Activated CD8-positive, alpha-beta memory T cell treated with anti-CD3 and anti-CD28 coated beads, Interleukin-2, amount 10 ng/mL, durations not matched to agents 7 days and 5 days (primary cell): ENCODE measurements at regions of chr9 and their contacts with region 1.

Region 1: DNA sequence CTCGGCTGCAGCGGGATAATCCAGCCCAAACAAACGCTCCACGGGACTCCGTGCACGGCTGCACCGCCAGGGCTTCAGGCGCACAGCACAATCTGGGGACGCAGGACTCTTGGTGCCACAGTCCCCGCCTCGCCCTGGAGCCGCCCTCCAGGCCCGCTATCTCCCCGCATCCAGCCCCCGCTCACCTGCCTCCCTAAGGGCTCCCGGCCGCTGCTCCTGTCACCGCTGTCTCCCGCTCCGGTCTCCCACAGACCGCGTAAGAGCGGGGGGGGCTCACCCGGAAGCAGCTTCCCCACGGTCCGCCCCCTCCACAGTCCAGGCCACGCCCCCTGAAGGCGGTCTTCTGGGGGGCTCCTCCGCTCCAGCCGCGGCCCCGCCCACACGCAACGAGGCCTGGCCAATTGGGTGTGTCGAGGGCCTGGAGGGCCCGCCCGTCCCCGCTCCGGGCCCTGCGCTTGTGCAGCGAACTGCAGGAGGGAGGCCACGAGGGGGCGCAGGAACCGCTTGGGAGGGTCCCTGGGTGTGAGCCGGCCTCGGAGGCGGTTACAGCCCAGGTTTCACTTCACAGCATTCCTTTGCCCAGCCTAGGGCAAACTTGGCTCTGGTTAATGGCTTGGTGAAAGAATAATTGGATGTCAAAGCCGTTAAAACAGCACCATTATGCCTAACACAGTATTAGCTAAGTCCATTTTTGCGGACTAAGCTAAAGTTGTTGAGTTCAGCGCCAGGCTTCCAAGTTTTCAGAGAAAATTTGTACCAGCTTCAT is at the start of gene ALAD:
- DNase-seq: peak; percentile 99
- ATAC-seq: peak; percentile 100
- H3K4me3 Mint-ChIP-seq: peak within 1 kb of the TSS; percentile 91
- H3K27ac Mint-ChIP-seq: peak within 1 kb of the TSS; percentile 86
- H3K4me1 Mint-ChIP-seq: peaks cover 21% of the 10 kb centered on the region
- H3K27me3 Mint-ChIP-seq: no peaks in the 10 kb centered on the region
- total RNA-seq, gene ALAD: 27.5 to 29.0 TPM

Region 2: DNA sequence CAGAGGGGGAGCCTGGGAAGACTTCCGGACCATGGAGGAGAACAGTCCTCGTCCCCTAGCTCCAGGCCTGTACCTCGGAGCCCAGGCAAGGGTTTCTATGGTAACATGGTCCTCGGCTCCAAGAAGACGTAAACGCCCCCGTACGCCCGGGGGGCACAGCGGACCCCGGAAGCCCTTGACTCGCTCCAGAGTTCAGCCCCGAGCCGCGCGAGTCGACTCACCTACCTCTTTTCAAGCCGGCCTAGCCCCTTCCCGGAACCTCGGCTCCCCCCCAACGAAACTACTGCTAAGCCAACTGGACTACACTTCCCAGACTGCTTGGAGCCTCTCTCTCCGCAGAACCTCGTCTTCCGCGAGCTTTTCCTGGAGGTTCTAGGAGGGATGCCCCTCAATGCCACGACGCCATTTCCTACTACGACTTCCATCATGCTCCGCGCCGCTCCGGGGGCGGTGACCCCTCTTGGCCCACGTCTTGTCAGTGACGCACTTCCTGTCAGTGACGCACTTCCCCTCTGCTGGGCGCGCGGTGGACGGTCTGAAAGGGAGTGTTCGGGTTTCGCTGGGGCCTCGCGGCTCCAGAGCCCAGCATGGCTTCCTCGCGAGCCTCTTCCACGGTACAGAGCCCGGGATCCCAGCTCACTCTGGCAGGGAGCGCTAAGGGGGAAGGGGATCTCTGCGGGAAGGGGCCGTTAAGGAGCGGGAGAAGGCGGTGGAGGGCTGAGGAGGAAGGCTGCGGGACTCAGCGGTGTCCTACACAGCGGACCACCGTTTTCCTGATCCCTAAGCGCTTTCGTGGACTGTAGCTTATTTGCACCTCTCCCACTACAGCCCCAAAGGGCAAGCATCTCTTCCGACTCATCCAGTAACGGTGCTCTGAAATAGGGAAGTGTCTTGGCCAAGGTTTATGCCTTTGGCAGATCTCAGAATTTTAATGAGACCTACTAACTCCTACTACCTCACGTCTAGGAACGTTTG is 125.8 kb before region 1 on chr9 and contains the starts of genes CDC26 and PRPF4:
- CTCF ChIA-PET with region 1: interaction called, 60 read pairs
- DNase-seq: peak; percentile 98
- ATAC-seq: peak; percentile 96
- H3K4me3 Mint-ChIP-seq: no peak within 1 kb of the TSS
- H3K27ac Mint-ChIP-seq: no peak within 1 kb of the TSS
- H3K4me1 Mint-ChIP-seq: peaks cover 32% of the 10 kb centered on the region
- H3K27me3 Mint-ChIP-seq: no peaks in the 10 kb centered on the region
- total RNA-seq, gene CDC26: 25.6 to 33.6 TPM
- total RNA-seq, gene PRPF4: 34.0 to 43.4 TPM

Region 3: DNA sequence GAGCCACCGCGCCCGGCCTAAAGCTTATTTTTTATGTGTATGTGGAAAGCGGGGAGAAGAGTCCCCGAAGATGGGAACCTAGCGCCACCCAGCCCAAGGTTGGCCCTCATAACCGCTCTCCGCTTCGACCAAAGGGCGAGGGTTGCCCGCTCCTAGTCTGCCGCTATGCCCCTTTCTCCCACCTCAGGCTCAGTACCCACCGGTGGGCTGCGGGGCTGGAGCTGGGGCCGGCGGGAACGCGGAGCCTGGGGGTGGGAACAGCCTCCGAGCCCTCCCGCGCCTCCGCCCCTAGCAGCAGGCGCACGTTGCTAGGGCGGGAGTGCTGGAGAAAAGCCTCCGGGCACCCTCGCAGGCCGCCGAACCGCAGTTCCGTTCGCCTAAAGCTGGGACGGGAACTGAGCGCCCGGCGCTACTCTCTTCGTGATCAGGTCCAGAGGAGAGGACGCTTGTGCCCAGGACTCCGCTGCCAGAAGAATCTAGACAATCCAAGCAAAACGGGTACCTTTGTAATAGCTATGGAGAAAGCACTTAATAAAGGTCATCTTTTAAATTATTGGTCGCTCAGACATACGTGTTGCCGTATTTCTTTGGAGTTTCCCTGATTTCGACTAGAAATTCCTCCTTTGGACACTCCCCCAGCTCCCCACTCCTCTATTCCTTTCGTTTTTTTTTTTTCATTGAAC is 61.1 kb before region 1 on chr9 and contains the start of gene WDR31:
- CTCF ChIA-PET with region 1: interaction called, 12 read pairs
- DNase-seq: peak; percentile 85
- ATAC-seq: peak; percentile 97
- H3K4me3 Mint-ChIP-seq: peak within 1 kb of the TSS; percentile 76
- H3K27ac Mint-ChIP-seq: peak within 1 kb of the TSS; percentile 37
- H3K4me1 Mint-ChIP-seq: peaks cover 51% of the 10 kb centered on the region
- H3K27me3 Mint-ChIP-seq: no peaks in the 10 kb centered on the region
- total RNA-seq, gene WDR31: 1.1 TPM

Region 4: DNA sequence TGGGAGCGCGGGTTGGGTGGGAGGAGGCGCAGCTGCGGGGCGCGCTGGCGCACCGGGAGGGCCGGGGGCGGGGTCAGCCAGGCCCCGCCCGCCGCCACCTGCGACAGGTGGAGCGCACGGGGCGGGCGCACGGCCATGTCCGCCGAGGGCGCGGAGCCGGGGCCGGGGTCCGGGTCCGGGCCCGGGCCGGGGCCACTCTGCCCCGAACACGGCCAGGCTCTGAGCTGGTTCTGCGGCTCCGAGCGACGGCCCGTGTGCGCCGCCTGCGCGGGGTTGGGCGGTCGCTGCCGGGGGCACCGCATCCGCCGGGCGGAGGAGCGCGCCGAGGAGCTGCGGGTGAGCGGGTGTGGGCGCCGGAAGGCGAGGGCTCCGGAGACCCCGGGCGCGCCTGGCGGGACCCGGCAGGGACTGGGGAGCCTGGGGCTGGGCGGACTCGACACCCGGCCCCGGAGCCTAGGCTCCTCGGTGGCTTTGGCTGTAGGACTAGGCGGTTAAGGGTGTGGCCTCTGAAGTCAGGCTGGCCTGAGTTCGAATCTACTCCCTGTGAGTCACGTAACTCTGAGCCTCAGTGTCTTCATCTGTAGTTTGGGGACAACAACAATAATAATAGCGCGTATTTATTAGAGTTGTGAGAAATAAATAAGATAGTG is 51.6 kb before region 1 on chr9 and contains the start of gene BSPRY:
- CTCF ChIA-PET with region 1: interaction called, 18 read pairs
- DNase-seq: peak; percentile 62
- ATAC-seq: peak; percentile 68
- H3K4me3 Mint-ChIP-seq: peak within 1 kb of the TSS; percentile 78
- H3K27ac Mint-ChIP-seq: peak within 1 kb of the TSS; percentile 72
- H3K4me1 Mint-ChIP-seq: peaks cover 52% of the 10 kb centered on the region
- H3K27me3 Mint-ChIP-seq: peaks cover 6% of the 10 kb centered on the region
- total RNA-seq, gene BSPRY: 6.0 to 7.2 TPM

Region 5: DNA sequence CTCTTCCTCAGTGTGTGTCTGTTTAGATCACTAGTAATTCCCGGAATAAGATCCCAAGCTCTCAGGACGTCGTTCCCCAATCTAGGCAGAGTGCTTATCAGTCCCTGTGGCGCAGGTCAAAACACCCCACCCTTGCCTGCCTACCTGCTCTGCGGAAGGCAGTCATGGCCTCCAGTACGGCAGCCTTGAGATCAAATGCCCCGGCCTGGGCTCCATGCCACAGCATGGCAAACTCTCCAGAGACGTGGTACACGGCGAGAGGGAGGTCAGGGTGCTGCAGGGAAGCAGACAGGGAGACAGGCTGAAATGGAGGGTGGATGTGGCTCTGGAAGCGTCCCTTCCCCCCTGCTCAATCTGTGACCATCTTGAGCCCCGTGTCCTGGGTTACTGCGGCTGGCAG is 12.4 kb before region 1 on chr9:
- CTCF ChIA-PET with region 1: interaction called, 11 read pairs
- DNase-seq: no peak
- ATAC-seq: no peak
- H3K4me3 Mint-ChIP-seq: no peak overlapping the region
- H3K27ac Mint-ChIP-seq: no peak overlapping the region
- H3K4me1 Mint-ChIP-seq: no peaks in the 10 kb centered on the region
- H3K27me3 Mint-ChIP-seq: no peaks in the 10 kb centered on the region

Region 6: DNA sequence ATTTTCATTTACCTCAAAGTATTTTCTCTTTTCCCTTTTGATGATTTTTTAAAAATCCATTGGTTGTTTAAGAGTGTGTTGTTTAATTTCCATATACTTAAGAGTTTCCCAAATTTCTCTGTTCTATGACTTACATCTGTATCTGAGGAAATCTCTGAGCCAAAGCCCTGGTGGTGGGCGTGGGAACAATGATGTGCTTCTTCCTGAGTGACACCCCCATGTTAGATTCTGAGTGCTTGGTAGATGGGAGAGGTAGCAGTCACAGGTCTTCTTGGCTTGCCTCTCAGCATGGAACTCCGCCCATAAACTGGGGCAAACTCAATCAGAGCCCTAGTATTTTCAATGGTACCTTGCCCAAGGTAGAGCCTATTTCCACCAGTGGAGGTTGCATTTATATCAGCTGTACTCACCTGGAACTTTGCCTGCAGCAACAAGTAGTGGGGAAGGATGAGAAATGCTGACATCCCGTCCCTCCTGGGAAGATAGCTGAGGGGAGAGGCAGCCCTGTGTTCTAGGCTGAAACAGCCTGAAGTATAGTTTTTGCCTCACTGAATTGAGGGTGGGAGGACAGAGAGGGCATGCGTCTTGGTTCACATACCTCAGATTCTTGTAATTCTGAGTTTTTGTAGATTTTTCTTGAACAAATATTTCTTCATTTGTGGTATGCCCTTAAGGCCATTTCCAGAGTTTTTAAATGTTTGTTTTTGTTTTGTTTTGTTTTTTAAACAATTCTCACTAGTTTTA is 35.7 kb after region 1 on chr9:
- CTCF ChIA-PET with region 1: no interaction called
- DNase-seq: no peak
- ATAC-seq: no peak
- H3K4me3 Mint-ChIP-seq: no peak overlapping the region
- H3K27ac Mint-ChIP-seq: no peak overlapping the region
- H3K4me1 Mint-ChIP-seq: no peaks in the 10 kb centered on the region
- H3K27me3 Mint-ChIP-seq: peaks cover 18% of the 10 kb centered on the region